CD8-positive, alpha-beta memory T cell (primary cell): ENCODE measurements at regions of chr12 and their contacts with region 1.

Region 1: DNA sequence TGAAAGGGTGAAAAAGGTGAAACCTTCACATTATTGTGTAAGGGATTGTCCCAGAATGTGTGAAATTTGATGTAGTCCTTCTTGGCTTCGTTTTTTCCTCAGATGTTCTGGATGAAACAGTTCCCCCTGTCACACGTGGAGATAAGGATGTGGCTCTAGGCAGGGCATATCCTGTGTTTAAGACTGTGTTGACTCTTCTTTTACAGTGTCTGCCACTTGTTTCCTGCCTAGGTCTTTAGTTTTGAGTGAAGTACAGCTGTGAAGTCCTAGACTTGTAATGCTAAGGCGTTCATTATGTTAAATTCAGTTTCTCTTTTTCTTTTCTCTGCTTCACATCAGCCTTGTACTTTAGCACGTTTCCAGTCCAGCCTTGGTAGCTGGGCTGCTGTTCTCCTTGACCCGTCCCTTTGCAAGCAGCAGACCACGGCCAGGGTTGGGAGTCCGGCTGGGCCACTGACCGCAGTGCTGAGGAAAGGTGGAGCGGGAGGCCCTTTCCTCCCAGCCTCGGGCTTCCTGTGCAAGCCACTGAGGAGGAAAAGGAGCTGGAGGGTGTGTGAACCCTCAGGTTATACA is 59.1 kb downstream of the RASSF3 start:
- DNase-seq: peak; percentile 28 to 85 (median 70)
- H3K4me3 ChIP-seq: peak overlapping the region; percentile 66
- H3K4me3 Mint-ChIP-seq: peak overlapping the region; percentile 85 to 94 (median 92)
- H3K27ac ChIP-seq: peak overlapping the region; percentile 79
- H3K27ac Mint-ChIP-seq: peak overlapping the region; percentile 91 to 99 (median 96)
- H3K4me1 ChIP-seq: peaks cover 99% of the 10 kb centered on the region
- H3K4me1 Mint-ChIP-seq: peaks cover 93 to 96% (median 95%) of the 10 kb centered on the region in 3 donors
- H3K27me3 ChIP-seq: no peaks in the 10 kb centered on the region
- H3K27me3 Mint-ChIP-seq: no peaks in the 10 kb centered on the region

Region 2: DNA sequence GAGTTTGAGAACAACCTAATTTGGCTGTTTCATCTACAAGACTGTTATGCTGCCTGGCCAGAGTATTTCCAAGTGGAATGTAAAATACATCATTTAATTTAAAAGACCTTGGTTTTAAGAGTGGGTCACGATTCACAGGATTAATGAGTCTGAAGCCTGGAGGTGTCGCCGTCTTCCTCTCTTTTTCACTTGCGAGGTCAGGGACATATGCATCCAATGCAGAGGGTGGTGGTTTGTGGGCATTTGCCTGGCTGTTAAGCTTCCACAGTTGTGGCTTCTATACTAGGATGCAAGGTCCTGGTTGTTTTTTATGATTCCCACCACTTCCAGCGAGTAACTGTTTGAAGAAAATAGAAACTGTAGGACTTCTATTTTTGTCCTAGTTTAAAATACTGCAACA is 81.9 kb before region 1 on chr12:
- CTCF ChIA-PET with region 1: interaction called, 3 read pairs
- POLR2A ChIA-PET with region 1: interaction called, 10 read pairs
- DNase-seq: no peak
- H3K4me3 ChIP-seq: no peak overlapping the region
- H3K4me3 Mint-ChIP-seq: no peak overlapping the region
- H3K27ac ChIP-seq: no peak overlapping the region
- H3K27ac Mint-ChIP-seq: no peak overlapping the region
- H3K4me1 ChIP-seq: peaks cover 22% of the 10 kb centered on the region
- H3K4me1 Mint-ChIP-seq: peaks cover 17 to 26% (median 24%) of the 10 kb centered on the region in 3 donors
- H3K27me3 ChIP-seq: no peaks in the 10 kb centered on the region
- H3K27me3 Mint-ChIP-seq: peaks cover 0 to 7% of the 10 kb centered on the region in 2 donors

Region 3: GRCh38 chr12:64633656-64634337 is 35.6 kb before region 1 on chr12:
- CTCF ChIA-PET with region 1: no interaction called
- POLR2A ChIA-PET with region 1: no interaction called
- DNase-seq: peak in 1 of 5 donors; percentile 56
- H3K4me3 ChIP-seq: no peak overlapping the region
- H3K4me3 Mint-ChIP-seq: peak overlapping the region in 6 of 7 donors; percentile 1 to 77 (median 34)
- H3K27ac ChIP-seq: no peak overlapping the region
- H3K27ac Mint-ChIP-seq: peak overlapping the region; percentile 51 to 88 (median 77)
- H3K4me1 ChIP-seq: peaks cover 87% of the 10 kb centered on the region
- H3K4me1 Mint-ChIP-seq: peaks cover 72 to 90% (median 80%) of the 10 kb centered on the region in 3 donors
- H3K27me3 ChIP-seq: no peaks in the 10 kb centered on the region
- H3K27me3 Mint-ChIP-seq: no peaks in the 10 kb centered on the region

Region 4: DNA sequence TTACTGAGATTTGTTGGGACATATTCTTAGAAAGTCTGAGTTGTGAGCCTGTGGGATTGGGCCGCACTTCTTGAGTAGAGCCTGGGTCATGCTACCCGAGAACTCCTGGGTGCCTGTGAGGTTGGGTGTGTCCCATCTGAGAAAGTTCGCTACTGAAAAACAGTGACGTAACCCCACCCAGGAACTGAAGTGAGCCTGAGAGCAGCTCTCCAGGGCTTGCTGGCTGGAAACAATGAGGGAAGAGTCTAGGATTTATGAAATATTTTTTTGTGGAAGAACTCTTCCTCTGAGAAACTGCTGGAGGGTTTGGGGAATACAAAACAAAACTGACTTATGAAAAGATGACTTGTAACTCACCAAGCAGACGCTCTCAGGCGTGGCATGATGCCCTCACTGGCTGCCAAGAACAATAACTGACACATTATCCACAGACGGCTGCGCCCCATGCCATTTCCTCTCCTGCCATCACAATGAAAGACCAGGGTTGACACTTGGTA is 10.2 kb after region 1 on chr12:
- CTCF ChIA-PET with region 1: interaction called, 78 read pairs
- POLR2A ChIA-PET with region 1: interaction called, 49 read pairs
- DNase-seq: peak; percentile 50 to 83 (median 79)
- H3K4me3 ChIP-seq: peak overlapping the region; percentile 42
- H3K4me3 Mint-ChIP-seq: peak overlapping the region; percentile 68 to 88 (median 78)
- H3K27ac ChIP-seq: peak overlapping the region; percentile 76
- H3K27ac Mint-ChIP-seq: peak overlapping the region; percentile 89 to 98 (median 96)
- H3K4me1 ChIP-seq: peaks cover 95% of the 10 kb centered on the region
- H3K4me1 Mint-ChIP-seq: peaks cover 86 to 98% (median 94%) of the 10 kb centered on the region in 3 donors
- H3K27me3 ChIP-seq: no peaks in the 10 kb centered on the region
- H3K27me3 Mint-ChIP-seq: peaks cover 0 to 4% of the 10 kb centered on the region in 2 donors